Psoas muscle (tissue), 8 donors: ENCODE measurements at regions of chr2 and their contacts with region 1.

Region 1: DNA sequence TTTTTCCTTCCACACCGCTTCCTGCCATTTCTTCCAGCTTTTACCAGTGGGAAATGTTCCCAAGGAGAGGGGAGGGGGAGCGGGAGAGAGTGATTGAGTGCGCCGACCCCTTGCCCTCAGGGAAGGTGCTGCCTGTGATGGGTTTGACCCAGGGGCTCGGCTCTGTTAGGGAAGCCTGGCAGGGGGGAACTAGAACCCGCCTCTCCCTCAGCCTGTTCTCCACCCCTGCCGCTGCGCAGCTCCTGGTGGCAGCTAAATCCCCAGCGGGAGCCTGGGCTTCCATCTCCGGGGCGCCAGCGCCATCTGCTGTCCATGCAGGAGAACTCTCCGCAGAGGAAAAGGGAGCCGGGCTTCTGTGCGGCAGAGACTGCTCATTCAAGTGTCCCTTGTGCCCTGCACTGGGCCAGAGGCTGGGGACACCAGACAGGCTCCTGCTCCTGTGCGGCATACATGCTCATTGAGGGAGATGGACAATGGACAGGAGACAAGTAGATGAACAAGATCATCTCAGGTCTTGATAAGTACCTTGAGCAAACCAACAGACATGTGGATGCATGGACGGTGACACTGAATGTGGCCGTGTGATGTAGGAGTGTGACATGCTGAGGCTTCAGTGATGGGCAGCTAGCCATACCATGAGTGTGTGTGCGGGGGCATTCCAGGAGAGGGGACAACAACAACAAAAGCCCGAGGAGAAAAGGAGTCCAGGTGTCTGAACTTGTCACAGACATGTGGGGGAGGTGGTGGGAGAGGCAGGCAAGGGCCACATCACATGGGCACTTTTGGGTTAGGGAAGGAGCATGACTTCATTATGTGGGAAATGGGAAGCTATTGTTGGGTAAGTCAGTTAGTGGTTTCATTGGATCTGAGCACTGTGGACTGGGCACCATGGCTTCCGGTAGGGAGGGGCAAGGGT is 13.3 kb downstream of the CHPF start:
- DNase-seq: peak; percentile 81 to 95
- ATAC-seq: peak; percentile 91 to 97 (median 92)
- H3K4me3 ChIP-seq: peak overlapping the region; percentile 35
- H3K27ac ChIP-seq: no peak overlapping the region
- H3K4me1 ChIP-seq: no peaks in the 10 kb centered on the region
- H3K27me3 ChIP-seq: peaks cover 0 to 12% (median 0%) of the 10 kb centered on the region in 3 donors
- CTCF ChIP-seq: peak; percentile 97

Region 2: GRCh38 chr2:219160186-219161017 is 369.9 kb before region 1 on chr2 and contains the start of gene NHEJ1:
- intact Hi-C with region 1: loop called in 1 of 2 experiments (anchors 10 kb)
- DNase-seq: peak; percentile 98 to 99
- ATAC-seq: peak; percentile 95 to 97 (median 96)
- H3K4me3 ChIP-seq: peak within 1 kb of the TSS; percentile 86
- H3K27ac ChIP-seq: peak within 1 kb of the TSS; percentile 93
- H3K4me1 ChIP-seq: peaks cover 5% of the 10 kb centered on the region
- H3K27me3 ChIP-seq: no peaks in the 10 kb centered on the region
- CTCF ChIP-seq: peak; percentile 99
- total RNA-seq, gene NHEJ1: 11.5 to 18.5 (median 13.4) TPM

Region 3: DNA sequence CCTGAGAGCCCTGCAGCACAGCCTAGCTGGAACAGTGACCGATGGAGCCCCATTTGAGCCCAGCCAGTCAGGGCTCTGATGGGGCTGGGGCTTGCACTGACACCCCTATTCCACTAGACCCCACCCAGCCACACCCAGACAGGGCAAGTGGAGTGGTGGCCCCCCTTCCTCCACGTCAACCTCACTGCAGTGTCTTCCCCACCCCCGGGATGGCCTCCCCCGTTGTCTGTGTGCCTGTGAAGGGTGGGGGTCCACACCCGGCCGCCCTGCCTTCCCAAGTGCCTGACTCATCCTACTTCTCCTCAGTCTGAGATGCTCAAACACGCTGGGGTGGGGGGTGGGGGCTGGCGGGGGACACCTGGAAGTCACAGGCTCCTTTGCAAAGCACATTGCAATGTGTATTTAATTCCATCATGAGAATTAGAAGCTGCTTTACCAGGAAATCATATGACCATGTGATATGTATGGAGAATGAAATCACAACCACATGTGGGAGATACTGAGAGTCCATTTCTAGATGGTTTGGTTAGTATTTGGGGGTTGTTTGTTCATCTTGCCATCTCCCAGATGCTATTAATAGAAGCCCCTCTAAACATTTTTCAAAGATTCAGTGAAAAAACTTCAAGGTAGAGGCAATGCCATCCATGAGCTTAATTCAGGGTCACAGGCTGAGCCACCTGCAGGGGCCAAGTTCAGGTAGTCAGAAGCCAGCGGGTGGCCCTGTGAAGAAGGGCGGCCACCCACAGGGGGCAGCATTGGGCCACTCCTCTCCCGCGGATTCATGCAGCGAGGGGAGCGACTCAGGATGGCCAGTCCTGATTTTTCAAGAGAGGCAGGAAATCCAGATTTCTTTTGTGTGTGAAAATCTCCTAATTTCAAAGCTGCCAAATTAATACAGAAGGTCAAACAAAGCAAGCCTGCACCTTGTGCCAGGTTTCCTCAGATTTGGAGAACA is 54.3 kb before region 1 on chr2:
- intact Hi-C with region 1: loop called in 1 of 2 experiments (anchors 5 kb)
- DNase-seq: peak; percentile 66 to 80
- ATAC-seq: peak; percentile 50 to 74 (median 69)
- H3K4me3 ChIP-seq: no peak overlapping the region
- H3K27ac ChIP-seq: no peak overlapping the region
- H3K4me1 ChIP-seq: no peaks in the 10 kb centered on the region
- H3K27me3 ChIP-seq: no peaks in the 10 kb centered on the region
- CTCF ChIP-seq: peak; percentile 82

Region 4: GRCh38 chr2:219498280-219499057 is 31.8 kb before region 1 on chr2 and contains the start of gene GMPPA:
- intact Hi-C with region 1: loop called in 1 of 2 experiments (anchors 2 kb)
- DNase-seq: peak; percentile 95 to 97
- ATAC-seq: peak; percentile 73 to 79 (median 76)
- H3K4me3 ChIP-seq: peak within 1 kb of the TSS; percentile 86
- H3K27ac ChIP-seq: peak within 1 kb of the TSS; percentile 91
- H3K4me1 ChIP-seq: peaks cover 43% of the 10 kb centered on the region
- H3K27me3 ChIP-seq: no peaks in the 10 kb centered on the region
- CTCF ChIP-seq: peak; percentile 4
- total RNA-seq, gene GMPPA: 14.4 to 23.4 (median 18.2) TPM